ENCODE measurements at regions of chr4 and their contacts with region 1.

Region 1: GRCh38 chr4:20773144-20773997 is 73.1 kb downstream of the PACRGL start:
- DNase-seq: peak in 3 of 9 donors; percentile 6 to 10 (median 7)
- ATAC-seq: peak; percentile 57
- H3K4me3 ChIP-seq: no peak overlapping the region
- H3K4me3 Mint-ChIP-seq: no peak overlapping the region
- H3K27ac ChIP-seq: no peak overlapping the region
- H3K27ac Mint-ChIP-seq: no peak overlapping the region
- H3K4me1 ChIP-seq: no peaks in the 10 kb centered on the region
- H3K4me1 Mint-ChIP-seq: peaks cover 0 to 4% (median 0%) of the 10 kb centered on the region in 7 donors
- H3K27me3 ChIP-seq: no peaks in the 10 kb centered on the region
- H3K27me3 Mint-ChIP-seq: peaks cover 0 to 11% (median 10%) of the 10 kb centered on the region in 5 donors

Region 2: GRCh38 chr4:20445933-20446723 is 327.2 kb before region 1 on chr4:
- CTCF ChIA-PET with region 1: no interaction called
- POLR2A ChIA-PET with region 1: no interaction called
- intact Hi-C with region 1: no loop called
- DNase-seq: no peak
- ATAC-seq: no peak
- H3K4me3 ChIP-seq: no peak overlapping the region
- H3K4me3 Mint-ChIP-seq: no peak overlapping the region
- H3K27ac ChIP-seq: no peak overlapping the region
- H3K27ac Mint-ChIP-seq: no peak overlapping the region
- H3K4me1 ChIP-seq: no peaks in the 10 kb centered on the region
- H3K4me1 Mint-ChIP-seq: no peaks in the 10 kb centered on the region
- H3K27me3 ChIP-seq: no peaks in the 10 kb centered on the region
- H3K27me3 Mint-ChIP-seq: peaks cover 0 to 3% (median 0%) of the 10 kb centered on the region in 5 donors

Region 3: DNA sequence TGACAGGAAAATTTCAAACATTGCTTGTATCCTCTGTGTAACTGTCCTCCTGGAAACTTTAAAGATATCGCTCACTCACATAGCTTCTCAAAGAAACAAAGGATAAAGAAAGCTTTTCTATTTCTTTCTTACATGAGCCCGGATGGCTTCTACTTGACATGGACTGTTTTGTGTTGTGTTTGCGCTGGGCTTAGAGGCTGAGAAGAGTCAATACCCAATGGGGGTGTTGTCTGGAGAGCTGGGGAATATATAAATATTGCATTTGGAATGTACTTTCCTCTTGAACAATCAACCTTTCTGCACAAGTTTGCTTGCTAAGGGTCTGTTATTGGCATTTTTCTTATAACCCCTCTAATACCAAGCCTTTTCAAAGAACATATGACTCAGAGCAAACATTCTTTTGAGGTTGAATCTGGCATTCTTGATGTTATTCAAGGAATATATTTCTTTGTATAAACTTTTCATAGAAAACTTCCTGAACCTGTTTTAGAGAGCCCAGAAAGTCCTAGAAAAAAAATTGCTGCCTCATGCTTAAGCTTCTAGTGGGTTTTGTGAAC is 258.8 kb after region 1 on chr4:
- CTCF ChIA-PET with region 1: no interaction called
- POLR2A ChIA-PET with region 1: no interaction called
- intact Hi-C with region 1: loop called in 1 of 2 experiments (anchors 10 kb)
- DNase-seq: no peak
- ATAC-seq: no peak
- H3K4me3 ChIP-seq: no peak overlapping the region
- H3K4me3 Mint-ChIP-seq: no peak overlapping the region
- H3K27ac ChIP-seq: no peak overlapping the region
- H3K27ac Mint-ChIP-seq: no peak overlapping the region
- H3K4me1 ChIP-seq: no peaks in the 10 kb centered on the region
- H3K4me1 Mint-ChIP-seq: no peaks in the 10 kb centered on the region
- H3K27me3 ChIP-seq: no peaks in the 10 kb centered on the region
- H3K27me3 Mint-ChIP-seq: no peaks in the 10 kb centered on the region

Region 4: GRCh38 chr4:21134994-21135393 is 361.6 kb after region 1 on chr4:
- CTCF ChIA-PET with region 1: interaction called, 20 read pairs
- POLR2A ChIA-PET with region 1: no interaction called
- intact Hi-C with region 1: no loop called
- DNase-seq: peak in 2 of 9 donors; percentile 2
- ATAC-seq: peak; percentile 51
- H3K4me3 ChIP-seq: no peak overlapping the region
- H3K4me3 Mint-ChIP-seq: no peak overlapping the region
- H3K27ac ChIP-seq: no peak overlapping the region
- H3K27ac Mint-ChIP-seq: no peak overlapping the region
- H3K4me1 ChIP-seq: no peaks in the 10 kb centered on the region
- H3K4me1 Mint-ChIP-seq: no peaks in the 10 kb centered on the region
- H3K27me3 ChIP-seq: no peaks in the 10 kb centered on the region
- H3K27me3 Mint-ChIP-seq: no peaks in the 10 kb centered on the region

Region 5: GRCh38 chr4:21469438-21470300 is 696.3 kb after region 1 on chr4:
- CTCF ChIA-PET with region 1: no interaction called
- POLR2A ChIA-PET with region 1: no interaction called
- intact Hi-C with region 1: loop called in 1 of 2 experiments (anchors 2 kb)
- DNase-seq: no peak
- ATAC-seq: no peak
- H3K4me3 ChIP-seq: no peak overlapping the region
- H3K4me3 Mint-ChIP-seq: no peak overlapping the region
- H3K27ac ChIP-seq: no peak overlapping the region
- H3K27ac Mint-ChIP-seq: no peak overlapping the region
- H3K4me1 ChIP-seq: no peaks in the 10 kb centered on the region
- H3K4me1 Mint-ChIP-seq: no peaks in the 10 kb centered on the region
- H3K27me3 ChIP-seq: no peaks in the 10 kb centered on the region
- H3K27me3 Mint-ChIP-seq: peaks cover 0 to 4% (median 0%) of the 10 kb centered on the region in 5 donors

Region 6: DNA sequence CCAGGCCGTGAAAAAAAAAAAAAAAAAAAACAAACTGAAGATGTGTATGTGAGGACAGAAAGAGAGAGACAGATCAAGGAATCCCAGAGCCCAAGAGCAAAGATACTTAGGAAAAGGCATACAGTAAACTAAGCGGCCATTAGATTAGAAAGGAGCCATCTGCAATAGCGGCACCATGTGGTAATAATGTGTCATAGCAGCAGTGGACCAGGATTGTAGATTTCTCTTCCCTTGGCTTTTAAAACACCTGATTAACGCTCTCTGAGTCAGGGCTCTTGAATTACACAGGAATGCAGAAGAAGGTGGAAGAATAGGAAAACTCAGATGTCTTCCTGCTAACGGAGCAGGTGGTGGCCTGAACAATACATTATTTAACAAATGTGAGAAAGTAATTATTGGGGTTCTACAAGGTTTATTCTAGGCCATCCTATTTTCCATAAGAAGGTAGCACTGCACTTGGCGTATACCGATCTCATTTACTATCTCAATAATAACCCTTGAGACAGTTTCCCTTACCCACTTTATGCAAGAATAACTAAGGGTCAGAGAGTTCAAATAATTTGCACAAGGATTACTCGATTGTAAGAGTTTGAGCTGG is 992.5 kb after region 1 on chr4:
- CTCF ChIA-PET with region 1: interaction called, 5 read pairs
- POLR2A ChIA-PET with region 1: no interaction called
- intact Hi-C with region 1: loop called (anchors 1 kb)
- DNase-seq: peak in 2 of 9 donors; percentile 11 to 12
- ATAC-seq: peak; percentile 59
- H3K4me3 ChIP-seq: no peak overlapping the region
- H3K4me3 Mint-ChIP-seq: no peak overlapping the region
- H3K27ac ChIP-seq: no peak overlapping the region
- H3K27ac Mint-ChIP-seq: peak overlapping the region in 1 of 9 donors; percentile 68
- H3K4me1 ChIP-seq: no peaks in the 10 kb centered on the region
- H3K4me1 Mint-ChIP-seq: peaks cover 0 to 3% (median 0%) of the 10 kb centered on the region in 7 donors
- H3K27me3 ChIP-seq: no peaks in the 10 kb centered on the region
- H3K27me3 Mint-ChIP-seq: peaks cover 0 to 17% (median 7%) of the 10 kb centered on the region in 5 donors